A673 (cell line): ENCODE measurements at regions of chr9 and their contacts with region 1.

Region 1: DNA sequence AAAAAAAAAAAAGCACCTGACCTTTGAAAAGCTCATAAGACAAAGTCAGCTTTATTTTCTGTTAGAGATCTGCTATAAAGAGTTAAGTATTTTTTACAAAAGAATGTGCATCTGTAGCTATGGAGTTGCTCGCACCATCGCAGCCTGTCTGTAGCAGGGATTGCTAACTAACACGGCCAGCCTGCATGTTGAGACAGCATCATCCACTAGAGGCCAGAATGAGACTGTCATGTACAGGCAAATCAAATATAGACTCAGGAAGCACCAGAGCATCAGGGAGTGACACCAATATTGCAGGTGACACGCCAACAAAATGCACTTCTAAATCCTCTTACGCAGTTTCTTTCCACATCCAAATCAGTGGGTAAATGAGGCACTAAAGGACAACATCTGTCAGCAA is 136.3 kb upstream of the RASEF start:
- DNase-seq: peak; percentile 34
- H3K4me3 ChIP-seq: no peak overlapping the region
- H3K27ac ChIP-seq: no peak overlapping the region
- H3K4me1 ChIP-seq: no peaks in the 10 kb centered on the region
- H3K27me3 ChIP-seq: peaks cover 10% of the 10 kb centered on the region
- CTCF ChIP-seq: peak; percentile 56

Region 2: DNA sequence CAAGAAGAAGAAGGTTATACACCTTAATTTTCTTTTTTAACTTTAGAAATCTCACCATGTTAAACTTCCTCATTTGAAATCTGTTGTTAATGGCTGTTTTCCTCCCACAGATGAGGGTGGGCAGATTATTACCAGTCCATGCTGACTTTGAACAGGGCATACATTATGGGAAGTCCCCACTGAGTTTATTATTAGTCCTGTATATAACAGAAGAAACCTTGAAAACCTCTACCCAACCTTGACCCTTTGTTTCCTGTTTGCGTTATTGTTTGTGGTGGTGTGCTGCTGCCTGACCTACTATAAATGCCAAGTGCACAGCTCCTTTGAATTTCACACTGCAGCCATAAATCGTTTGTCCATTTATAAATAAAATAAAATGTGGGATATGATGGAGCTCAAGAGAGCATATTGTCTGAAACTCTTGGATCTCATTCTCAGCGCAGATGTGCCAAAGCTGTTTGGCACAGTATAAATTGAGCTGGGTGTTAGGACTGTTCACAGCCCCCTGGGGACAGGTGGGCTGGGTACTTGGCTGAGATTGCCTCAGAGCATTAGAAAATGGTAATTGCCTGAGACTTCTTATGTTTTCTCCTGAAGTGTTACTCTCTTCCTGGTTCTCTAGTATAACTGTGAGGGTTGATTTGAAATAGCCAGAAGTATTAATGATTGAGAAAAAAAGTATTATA is 1071.1 kb before region 1 on chr9:
- CTCF ChIA-PET with region 1: no interaction called
- POLR2A ChIA-PET with region 1: no interaction called
- intact Hi-C with region 1: no loop called
- DNase-seq: no peak
- H3K4me3 ChIP-seq: no peak overlapping the region
- H3K27ac ChIP-seq: no peak overlapping the region
- H3K4me1 ChIP-seq: no peaks in the 10 kb centered on the region
- H3K27me3 ChIP-seq: no peaks in the 10 kb centered on the region
- CTCF ChIP-seq: no peak

Region 3: GRCh38 chr9:83119873-83120272 is 79.4 kb before region 1 on chr9:
- CTCF ChIA-PET with region 1: no interaction called
- POLR2A ChIA-PET with region 1: no interaction called
- intact Hi-C with region 1: no loop called
- DNase-seq: no peak
- H3K4me3 ChIP-seq: no peak overlapping the region
- H3K27ac ChIP-seq: no peak overlapping the region
- H3K4me1 ChIP-seq: no peaks in the 10 kb centered on the region
- H3K27me3 ChIP-seq: peaks cover 3% of the 10 kb centered on the region
- CTCF ChIP-seq: no peak

Region 4: GRCh38 chr9:83441390-83441789 is 242.1 kb after region 1 on chr9:
- CTCF ChIA-PET with region 1: no interaction called
- POLR2A ChIA-PET with region 1: no interaction called
- intact Hi-C with region 1: no loop called
- DNase-seq: no peak
- H3K4me3 ChIP-seq: no peak overlapping the region
- H3K27ac ChIP-seq: no peak overlapping the region
- H3K4me1 ChIP-seq: no peaks in the 10 kb centered on the region
- H3K27me3 ChIP-seq: no peaks in the 10 kb centered on the region
- CTCF ChIP-seq: no peak

Region 5: GRCh38 chr9:83544002-83544698 is 344.9 kb after region 1 on chr9:
- CTCF ChIA-PET with region 1: no interaction called
- POLR2A ChIA-PET with region 1: no interaction called
- intact Hi-C with region 1: loop called (anchors 5 kb)
- DNase-seq: peak; percentile 82
- H3K4me3 ChIP-seq: no peak overlapping the region
- H3K27ac ChIP-seq: no peak overlapping the region
- H3K4me1 ChIP-seq: no peaks in the 10 kb centered on the region
- H3K27me3 ChIP-seq: peaks cover 27% of the 10 kb centered on the region
- CTCF ChIP-seq: peak; percentile 80